MCF 10A (cell line): ENCODE measurements at regions of chr1 and their contacts with region 1.

Region 1: DNA sequence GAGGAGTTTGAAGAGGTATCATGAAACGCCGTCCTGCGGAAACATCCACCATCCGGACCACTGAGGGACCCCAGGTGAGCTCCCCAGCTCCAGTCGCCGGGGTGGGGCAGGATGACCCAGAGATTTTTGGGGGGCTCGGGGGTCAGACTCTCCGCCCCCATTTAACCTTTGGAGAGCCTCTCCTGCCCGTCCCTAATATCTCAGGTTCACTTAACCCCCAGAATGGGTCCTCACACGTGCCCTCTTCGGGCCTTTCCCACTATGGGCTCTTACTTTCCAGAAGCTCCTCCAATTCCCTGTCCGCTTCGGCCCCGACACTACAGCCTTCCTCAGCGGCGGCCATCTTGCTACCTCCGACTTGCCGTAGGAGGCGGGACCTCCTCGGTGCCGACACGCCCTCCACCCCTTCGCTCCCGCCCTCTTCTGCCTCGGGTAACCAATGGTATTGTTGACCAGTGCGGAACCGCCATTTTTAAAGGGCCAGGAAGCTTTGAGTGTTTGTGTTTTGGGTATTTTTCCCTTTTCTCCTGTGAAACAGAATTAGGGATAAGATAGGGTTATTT is at the start of gene PEX19:
- DNase-seq: peak; percentile 97
- H3K4me3 Mint-ChIP-seq: peak within 1 kb of the TSS; percentile 100
- H3K27ac Mint-ChIP-seq: peak within 1 kb of the TSS; percentile 99
- H3K4me1 Mint-ChIP-seq: peaks cover 19% of the 10 kb centered on the region
- H3K27me3 Mint-ChIP-seq: no peaks in the 10 kb centered on the region
- CTCF ChIP-seq: no peak
- total RNA-seq, gene PEX19: 61.2 and 73.2 TPM in 2 replicates

Region 2: DNA sequence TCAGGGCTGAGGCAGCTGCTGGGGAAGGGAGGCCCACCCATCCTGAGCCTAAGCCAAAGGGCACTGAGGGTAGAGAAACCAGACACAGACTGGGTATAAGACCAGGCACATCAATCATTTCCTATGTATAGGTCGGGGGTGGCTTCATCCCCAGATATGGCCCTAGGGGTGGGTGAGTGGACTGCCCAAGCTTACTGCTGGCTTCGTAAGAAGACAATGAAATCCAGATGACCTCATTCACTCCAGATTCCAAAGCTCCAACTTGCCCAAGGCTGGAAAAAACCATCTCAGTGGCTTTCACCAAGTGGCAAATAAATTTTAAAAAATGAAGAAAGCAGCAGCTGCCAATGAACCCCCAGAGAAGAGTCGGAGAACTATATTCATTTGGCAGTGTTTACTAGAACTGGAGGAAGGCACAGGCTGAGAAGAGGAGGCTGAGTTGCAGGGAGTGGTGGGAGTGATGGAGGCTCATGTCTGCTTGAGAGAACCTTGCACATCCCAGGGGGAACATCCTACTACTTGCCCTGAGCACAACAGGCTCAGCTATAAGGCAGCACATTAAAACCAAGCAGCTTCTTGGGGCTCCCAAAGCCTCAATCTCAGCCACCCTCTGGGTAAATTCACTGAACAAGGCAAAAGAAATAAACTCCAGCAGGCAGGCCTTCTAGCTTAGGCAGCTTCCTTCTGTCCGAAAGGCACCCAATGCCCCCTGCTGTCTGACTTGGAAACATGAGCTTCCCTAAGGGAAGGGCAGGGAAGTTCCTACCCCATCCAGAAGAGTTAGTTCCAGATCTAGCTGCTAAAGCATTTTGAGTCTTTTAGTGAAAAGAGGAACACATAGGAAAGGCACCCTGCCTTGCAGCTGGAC is 65.6 kb before region 1 on chr1:
- CTCF ChIA-PET with region 1: interaction called, 50 read pairs
- POLR2A ChIA-PET with region 1: interaction called, 5 read pairs
- intact Hi-C with region 1: no loop called
- DNase-seq: peak; percentile 61
- H3K4me3 Mint-ChIP-seq: no peak overlapping the region
- H3K27ac Mint-ChIP-seq: no peak overlapping the region
- H3K4me1 Mint-ChIP-seq: peaks cover 7% of the 10 kb centered on the region
- H3K27me3 Mint-ChIP-seq: no peaks in the 10 kb centered on the region
- CTCF ChIP-seq: peak; percentile 47

Region 3: GRCh38 chr1:160261893-160262794 is 22.7 kb before region 1 on chr1 and contains the start of gene DCAF8:
- CTCF ChIA-PET with region 1: interaction called, 133 read pairs
- POLR2A ChIA-PET with region 1: interaction called, 247 read pairs
- intact Hi-C with region 1: loop called (anchors 1 kb)
- DNase-seq: peak; percentile 99
- H3K4me3 Mint-ChIP-seq: peak within 1 kb of the TSS; percentile 97
- H3K27ac Mint-ChIP-seq: peak within 1 kb of the TSS; percentile 100
- H3K4me1 Mint-ChIP-seq: peaks cover 28% of the 10 kb centered on the region
- H3K27me3 Mint-ChIP-seq: peaks cover 8% of the 10 kb centered on the region
- CTCF ChIP-seq: no peak
- total RNA-seq, gene DCAF8: 181 and 208 TPM in 2 replicates

Region 4: DNA sequence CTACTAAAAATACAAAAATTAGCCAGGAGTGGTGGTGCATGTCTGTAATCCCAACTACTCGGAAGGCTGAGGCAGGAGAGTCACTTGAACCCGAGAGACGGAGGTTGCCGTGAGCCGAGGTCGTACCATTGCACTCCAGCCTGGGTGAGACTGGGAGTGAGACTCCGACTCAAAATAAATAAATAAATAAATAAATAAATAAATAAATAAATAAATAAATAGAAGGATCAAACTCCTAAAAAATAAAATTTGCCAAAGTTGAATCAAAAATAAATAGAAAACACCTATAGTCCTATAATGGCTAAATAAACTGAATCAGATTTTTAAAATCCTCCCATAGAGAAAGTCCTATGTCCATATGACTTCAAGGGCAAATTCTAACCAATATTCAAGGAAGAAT is 15.3 kb after region 1 on chr1:
- CTCF ChIA-PET with region 1: interaction called, 5 read pairs
- POLR2A ChIA-PET with region 1: interaction called, 14 read pairs
- intact Hi-C with region 1: no loop called
- DNase-seq: no peak
- H3K4me3 Mint-ChIP-seq: no peak overlapping the region
- H3K27ac Mint-ChIP-seq: no peak overlapping the region
- H3K4me1 Mint-ChIP-seq: no peaks in the 10 kb centered on the region
- H3K27me3 Mint-ChIP-seq: no peaks in the 10 kb centered on the region
- CTCF ChIP-seq: no peak

Region 5: GRCh38 chr1:160342953-160343869 is 58.3 kb after region 1 on chr1 and contains the starts of genes COPA and NCSTN:
- CTCF ChIA-PET with region 1: interaction called, 6 read pairs
- POLR2A ChIA-PET with region 1: interaction called, 13 read pairs
- intact Hi-C with region 1: no loop called
- DNase-seq: peak; percentile 98
- H3K4me3 Mint-ChIP-seq: peak within 1 kb of the TSS; percentile 87
- H3K27ac Mint-ChIP-seq: peak within 1 kb of the TSS; percentile 99
- H3K4me1 Mint-ChIP-seq: peaks cover 29% of the 10 kb centered on the region
- H3K27me3 Mint-ChIP-seq: no peaks in the 10 kb centered on the region
- CTCF ChIP-seq: no peak
- total RNA-seq, gene COPA: 273 and 353 TPM in 2 replicates
- total RNA-seq, gene NCSTN: 125 and 129 TPM in 2 replicates